Cardiac septum (tissue), 1 donor: ENCODE measurements at regions of chr17 and their contacts with region 1.

Region 1: GRCh38 chr17:31452101-31452500 is 60.6 kb downstream of the RAB11FIP4 start:
- DNase-seq: no peak

Region 2: DNA sequence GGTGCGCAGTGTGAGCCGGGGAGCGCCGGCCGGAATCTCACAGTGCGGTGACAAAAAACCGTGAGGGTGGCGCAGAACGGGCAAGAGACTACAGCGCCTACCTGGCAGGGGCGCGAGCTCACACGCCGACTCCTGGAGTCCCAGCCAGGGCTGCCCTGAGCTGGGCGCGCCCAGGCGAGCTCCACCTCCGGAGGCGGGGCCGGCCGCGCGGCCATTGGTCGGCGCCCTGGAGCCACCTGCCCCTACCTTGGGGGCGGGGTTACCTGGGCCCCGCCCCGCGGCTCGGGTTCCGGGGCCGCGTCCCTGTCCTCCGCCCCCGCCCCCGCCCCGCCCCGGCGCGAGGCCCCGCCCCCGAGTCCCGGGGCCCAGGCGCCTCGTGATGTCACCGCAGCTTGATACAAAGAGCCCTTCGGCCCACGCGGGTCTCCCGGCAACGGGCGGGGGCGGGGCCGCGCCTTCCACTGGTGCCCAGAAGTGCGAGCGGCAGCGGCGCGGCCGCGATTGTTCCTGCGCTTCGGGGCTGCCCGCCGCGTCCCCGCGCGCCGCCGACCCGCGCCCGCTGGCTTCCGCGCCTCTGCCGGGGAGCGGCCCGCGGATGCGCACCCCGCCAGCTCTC is 35.7 kb after region 1 on chr17:
- intact Hi-C with region 1: loop called (anchors 5 kb)
- DNase-seq: peak; percentile 96